BJ (cell line): ENCODE measurements at regions of chr11 and their contacts with region 1.

Region 1: DNA sequence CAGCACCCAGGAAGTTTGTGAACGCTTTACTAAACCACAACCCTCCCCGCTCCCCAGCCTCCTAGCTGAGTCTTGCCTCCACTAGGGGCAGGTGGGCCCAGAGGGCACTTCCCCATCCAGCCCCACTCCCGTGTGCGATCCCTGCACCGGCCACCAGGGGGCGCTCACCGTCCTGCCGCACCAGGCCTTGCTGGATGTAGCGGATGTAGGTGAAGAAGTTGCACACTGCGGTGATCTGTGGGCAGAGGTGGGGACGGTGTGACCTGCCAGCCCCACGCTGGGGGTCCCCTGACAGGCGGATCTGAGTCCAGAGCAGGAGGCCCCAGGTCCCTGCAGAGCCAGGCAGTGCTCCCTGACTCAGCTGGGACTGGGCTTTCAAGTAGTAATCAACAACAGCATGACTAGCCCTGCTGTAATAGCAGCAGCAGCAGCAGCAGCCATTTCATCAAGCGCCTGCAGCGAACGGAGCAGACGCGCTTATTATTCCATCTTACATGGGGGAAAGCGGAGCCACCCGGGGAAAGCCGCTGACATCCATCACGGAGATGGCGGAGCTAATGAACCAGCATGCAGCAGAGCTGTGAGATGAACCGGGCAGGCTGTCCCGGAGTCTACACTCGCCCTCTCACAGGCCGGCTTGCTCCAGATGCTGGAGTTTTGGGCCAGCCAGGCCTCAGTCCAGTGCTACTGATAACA is 7.9 kb upstream of the FADS3 start:
- DNase-seq: no peak
- H3K4me3 ChIP-seq: no peak overlapping the region
- H3K27me3 ChIP-seq: no peaks in the 10 kb centered on the region
- CTCF ChIP-seq: peak; percentile 100

Region 2: DNA sequence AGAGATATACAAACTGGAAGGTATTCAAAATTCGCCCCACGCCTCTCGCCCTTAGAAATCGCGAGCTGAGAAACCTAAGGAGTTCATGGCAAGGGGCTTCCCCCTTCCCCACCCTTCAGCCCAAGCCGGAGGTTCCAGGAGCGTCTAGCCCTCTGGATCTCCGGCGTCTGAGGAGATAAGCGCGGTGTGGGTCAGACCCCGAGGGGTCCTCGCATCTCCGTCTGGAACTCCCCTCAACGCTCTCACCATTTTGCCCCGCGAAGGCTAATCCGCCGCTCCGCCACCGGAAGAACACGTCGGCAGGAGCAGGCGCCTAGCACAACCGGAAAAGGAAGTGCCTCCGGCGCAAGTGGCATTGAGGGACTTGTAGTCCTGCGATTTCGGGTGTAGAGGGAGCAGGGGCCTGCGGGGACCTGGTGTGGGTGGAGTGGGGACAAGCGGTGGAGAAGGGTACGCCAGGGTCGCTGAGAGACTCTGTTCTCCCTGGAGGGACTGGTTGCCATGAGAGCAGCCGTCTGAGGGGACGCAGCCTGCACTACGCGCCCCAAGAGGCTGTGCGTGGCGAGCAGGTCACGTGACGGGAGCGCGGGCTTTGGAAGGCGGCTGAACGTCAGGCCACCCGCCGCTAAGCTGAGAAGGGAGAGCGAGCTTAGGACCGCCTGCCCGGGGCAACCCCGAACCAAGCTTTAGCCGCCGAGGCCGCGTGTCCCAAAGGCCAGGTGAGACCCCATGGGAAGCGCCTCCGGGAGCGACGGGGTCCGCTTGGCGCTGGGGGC is 106.8 kb before region 1 on chr11 and contains the starts of genes FEN1 and TMEM258:
- CTCF ChIA-PET with region 1: interaction called, 33 read pairs
- POLR2A ChIA-PET with region 1: no interaction called
- DNase-seq: peak; percentile 71
- H3K4me3 ChIP-seq: peak within 1 kb of the TSS; percentile 81
- H3K27me3 ChIP-seq: no peaks in the 10 kb centered on the region
- CTCF ChIP-seq: no peak
- polyA plus RNA-seq, gene FEN1: 11.7 and 13.2 TPM in 2 replicates
- polyA plus RNA-seq, gene TMEM258: 371 and 399 TPM in 2 replicates

Region 3: GRCh38 chr11:61871158-61871597 is 28.1 kb before region 1 on chr11:
- CTCF ChIA-PET with region 1: interaction called, 69 read pairs
- POLR2A ChIA-PET with region 1: no interaction called
- DNase-seq: no peak
- H3K4me3 ChIP-seq: no peak overlapping the region
- H3K27me3 ChIP-seq: no peaks in the 10 kb centered on the region
- CTCF ChIP-seq: peak; percentile 97

Region 4: DNA sequence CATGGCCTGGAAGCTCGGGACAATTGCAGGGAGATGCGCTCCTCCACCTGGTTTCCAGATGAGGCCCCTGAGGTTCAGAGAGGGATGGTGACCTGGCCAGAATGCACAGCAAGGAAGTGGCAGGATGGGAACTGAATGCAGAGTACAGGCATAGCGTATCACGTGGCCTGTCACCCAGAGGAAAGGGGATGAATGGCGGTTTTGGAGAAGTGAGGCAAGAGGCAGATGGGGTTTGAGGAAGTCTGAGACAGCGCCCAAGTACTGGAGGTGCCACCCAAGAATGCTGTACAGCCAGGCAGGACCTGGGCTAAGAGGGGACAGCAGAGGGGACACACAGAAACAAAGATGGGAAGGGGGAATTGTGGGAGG is 13.2 kb after region 1 on chr11:
- CTCF ChIA-PET with region 1: interaction called, 57 read pairs
- POLR2A ChIA-PET with region 1: no interaction called
- DNase-seq: no peak
- H3K4me3 ChIP-seq: no peak overlapping the region
- H3K27me3 ChIP-seq: no peaks in the 10 kb centered on the region
- CTCF ChIP-seq: no peak

Region 5: GRCh38 chr11:61940466-61940865 is 41.2 kb after region 1 on chr11:
- CTCF ChIA-PET with region 1: interaction called, 374 read pairs
- POLR2A ChIA-PET with region 1: no interaction called
- DNase-seq: no peak
- H3K4me3 ChIP-seq: no peak overlapping the region
- H3K27me3 ChIP-seq: peaks cover 3% of the 10 kb centered on the region
- CTCF ChIP-seq: no peak

Region 6: DNA sequence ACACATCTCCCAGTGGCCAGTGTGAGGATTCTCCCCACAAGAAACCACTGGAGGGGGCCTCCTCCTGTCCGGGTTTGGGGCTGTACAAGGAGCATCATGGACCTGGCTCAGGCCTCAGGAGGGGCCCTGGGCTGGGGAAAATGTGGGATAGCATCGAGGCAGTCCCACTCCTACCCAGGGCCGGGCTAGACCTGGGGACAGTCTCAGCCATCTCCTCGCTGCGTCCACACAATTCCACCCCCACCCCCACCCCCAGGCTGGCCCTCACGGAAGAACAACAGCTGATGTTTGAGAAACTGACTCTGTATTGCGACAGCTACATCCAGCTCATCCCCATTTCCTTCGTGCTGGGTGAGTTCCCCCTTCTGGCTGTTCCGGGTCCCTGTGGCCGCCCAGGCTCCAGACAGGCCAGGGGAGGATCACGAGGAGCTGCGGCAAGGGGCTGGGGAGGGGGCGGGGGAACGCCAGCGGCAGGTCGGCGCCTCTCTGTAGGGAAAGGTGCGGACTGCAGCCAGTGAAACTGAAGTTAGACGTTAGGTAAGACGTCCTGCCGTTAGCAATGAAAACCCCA is 55.6 kb after region 1 on chr11:
- CTCF ChIA-PET with region 1: interaction called, 374 read pairs
- POLR2A ChIA-PET with region 1: no interaction called
- DNase-seq: peak; percentile 48
- H3K4me3 ChIP-seq: peak overlapping the region; percentile 47
- H3K27me3 ChIP-seq: no peaks in the 10 kb centered on the region
- CTCF ChIP-seq: peak; percentile 51

Region 7: GRCh38 chr11:62088331-62088933 is 189.1 kb after region 1 on chr11:
- CTCF ChIA-PET with region 1: interaction called, 183 read pairs
- POLR2A ChIA-PET with region 1: no interaction called
- DNase-seq: no peak
- H3K4me3 ChIP-seq: no peak overlapping the region
- H3K27me3 ChIP-seq: no peaks in the 10 kb centered on the region
- CTCF ChIP-seq: no peak